Activated CD8-positive, alpha-beta T cell treated with anti-CD3 and anti-CD28 coated beads for 36 hours (primary cell): ENCODE measurements at regions of chr1 and their contacts with region 1.

Region 1: DNA sequence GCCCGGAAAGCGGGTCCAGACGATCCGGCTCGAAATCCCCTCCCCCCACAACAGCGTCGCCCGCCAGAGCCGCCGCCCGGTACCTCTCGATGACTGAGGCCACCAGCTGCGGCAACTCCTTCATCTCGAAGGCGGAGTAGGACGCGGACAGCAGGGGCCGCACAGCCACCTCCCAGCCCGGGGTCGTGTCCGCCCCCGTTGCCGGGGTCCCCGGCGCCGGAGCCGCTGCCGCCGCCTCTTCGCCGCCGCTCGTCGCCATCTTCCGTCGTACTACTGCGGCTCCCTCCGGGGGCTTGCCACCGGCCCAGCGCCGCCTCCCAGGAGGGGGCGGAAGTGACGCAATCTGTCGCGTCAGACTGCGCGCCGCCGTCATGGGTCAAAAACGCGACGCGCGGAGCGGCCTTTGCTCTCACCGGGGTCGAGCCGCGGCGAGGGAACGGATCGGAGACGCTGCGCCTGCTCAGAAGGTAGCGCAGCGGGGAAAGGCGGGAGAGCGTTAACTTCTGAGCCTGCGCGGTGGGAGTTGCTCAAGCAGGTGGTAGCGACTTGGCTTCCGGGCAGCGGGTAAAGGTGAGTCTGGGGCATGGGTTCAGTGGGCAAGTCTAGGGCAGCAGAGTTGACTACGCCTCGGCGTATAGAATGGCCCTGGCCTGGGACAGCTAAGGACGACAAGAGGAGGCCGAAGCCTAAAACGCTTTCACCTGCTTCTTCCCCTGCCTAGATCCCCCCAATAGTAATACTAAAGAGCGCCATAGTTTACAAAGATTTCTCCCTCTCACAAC is at the start of gene UBR4:
- DNase-seq: peak; percentile 97
- ATAC-seq: peak; percentile 88
- H3K4me3 Mint-ChIP-seq: peak within 1 kb of the TSS; percentile 93
- H3K27ac Mint-ChIP-seq: peak within 1 kb of the TSS; percentile 98
- H3K4me1 Mint-ChIP-seq: peaks cover 61% of the 10 kb centered on the region
- H3K27me3 Mint-ChIP-seq: no peaks in the 10 kb centered on the region
- CTCF ChIP-seq: no peak
- total RNA-seq, gene UBR4: 133 TPM

Region 2: GRCh38 chr1:19133360-19133759 is 76.8 kb before region 1 on chr1:
- CTCF ChIA-PET with region 1: no interaction called
- POLR2A ChIA-PET with region 1: no interaction called
- intact Hi-C with region 1: no loop called
- DNase-seq: no peak
- ATAC-seq: no peak
- H3K4me3 Mint-ChIP-seq: no peak overlapping the region
- H3K27ac Mint-ChIP-seq: no peak overlapping the region
- H3K4me1 Mint-ChIP-seq: no peaks in the 10 kb centered on the region
- H3K27me3 Mint-ChIP-seq: no peaks in the 10 kb centered on the region
- CTCF ChIP-seq: no peak

Region 3: GRCh38 chr1:19197845-19198244 is 12.3 kb before region 1 on chr1:
- CTCF ChIA-PET with region 1: interaction called, 3 read pairs
- POLR2A ChIA-PET with region 1: interaction called, 13 read pairs
- intact Hi-C with region 1: no loop called
- DNase-seq: no peak
- ATAC-seq: no peak
- H3K4me3 Mint-ChIP-seq: no peak overlapping the region
- H3K27ac Mint-ChIP-seq: no peak overlapping the region
- H3K4me1 Mint-ChIP-seq: peaks cover 11% of the 10 kb centered on the region
- H3K27me3 Mint-ChIP-seq: no peaks in the 10 kb centered on the region
- CTCF ChIP-seq: no peak

Region 4: GRCh38 chr1:19220991-19221390 is 10.8 kb after region 1 on chr1:
- CTCF ChIA-PET with region 1: interaction called, 4 read pairs
- POLR2A ChIA-PET with region 1: interaction called, 19 read pairs
- intact Hi-C with region 1: no loop called
- DNase-seq: no peak
- ATAC-seq: no peak
- H3K4me3 Mint-ChIP-seq: no peak overlapping the region
- H3K27ac Mint-ChIP-seq: peak overlapping the region; percentile 34
- H3K4me1 Mint-ChIP-seq: peaks cover 10% of the 10 kb centered on the region
- H3K27me3 Mint-ChIP-seq: no peaks in the 10 kb centered on the region
- CTCF ChIP-seq: no peak